Mammary epithelial cell (primary cell): ENCODE measurements at regions of chr20 and their contacts with region 1.

Region 1: DNA sequence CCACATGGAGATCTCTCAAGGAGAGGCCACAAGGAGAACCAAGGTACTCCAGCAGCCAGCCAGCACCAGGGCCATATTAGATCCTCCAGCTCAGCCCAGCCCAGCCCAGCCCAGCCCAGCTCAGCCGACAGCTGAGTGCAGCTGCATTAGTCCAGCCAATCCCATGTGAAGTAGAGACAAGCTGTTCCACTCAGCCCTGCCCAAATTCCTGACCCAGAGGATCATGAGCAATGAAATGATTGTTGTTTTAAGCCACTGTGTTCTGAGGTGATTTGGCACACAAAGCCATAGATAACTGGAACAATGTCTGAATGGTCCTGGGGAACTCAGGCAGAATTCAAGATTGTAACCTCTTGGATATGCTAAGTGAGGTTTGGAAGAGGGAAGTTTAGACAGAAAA is 59.5 kb upstream of the BMP2 start:
- DNase-seq: peak; percentile 84
- H3K4me3 ChIP-seq: no peak overlapping the region
- H3K27ac ChIP-seq: peak overlapping the region; percentile 67
- H3K4me1 ChIP-seq: peaks cover 25% of the 10 kb centered on the region
- H3K27me3 ChIP-seq: no peaks in the 10 kb centered on the region
- CTCF ChIP-seq: no peak

Region 2: DNA sequence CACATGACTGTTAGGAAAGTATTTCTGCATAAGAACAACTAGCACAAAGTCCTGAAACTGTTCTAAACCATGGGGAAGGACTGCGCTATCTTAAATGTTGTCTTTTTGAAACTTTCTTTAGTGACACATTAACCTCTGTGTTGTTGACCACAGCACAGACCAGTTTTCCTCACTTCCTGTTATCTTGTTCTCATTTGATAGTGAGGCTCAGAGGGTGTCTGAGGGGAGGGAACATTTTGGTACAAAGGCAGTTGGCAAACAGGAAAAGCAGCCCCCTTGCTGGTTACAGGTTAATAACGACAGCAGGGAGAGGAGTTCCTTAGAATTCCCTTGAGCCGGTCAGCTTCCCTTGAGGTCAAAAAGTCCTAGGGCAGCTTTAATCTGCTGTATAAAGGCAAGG is 84.0 kb before region 1 on chr20:
- CTCF ChIA-PET with region 1: no interaction called
- dilution Hi-C with region 1: loop called (anchors 5 kb)
- in situ Hi-C with region 1: no loop called
- intact Hi-C with region 1: no loop called
- DNase-seq: no peak
- H3K4me3 ChIP-seq: no peak overlapping the region
- H3K27ac ChIP-seq: no peak overlapping the region
- H3K4me1 ChIP-seq: no peaks in the 10 kb centered on the region
- H3K27me3 ChIP-seq: no peaks in the 10 kb centered on the region
- CTCF ChIP-seq: no peak

Region 3: GRCh38 chr20:6651016-6651415 is 57.0 kb before region 1 on chr20:
- CTCF ChIA-PET with region 1: no interaction called
- dilution Hi-C with region 1: loop called (anchors 5 kb)
- in situ Hi-C with region 1: no loop called
- intact Hi-C with region 1: no loop called
- DNase-seq: peak; percentile 98
- H3K4me3 ChIP-seq: no peak overlapping the region
- H3K27ac ChIP-seq: peak overlapping the region; percentile 35
- H3K4me1 ChIP-seq: peaks cover 36% of the 10 kb centered on the region
- H3K27me3 ChIP-seq: no peaks in the 10 kb centered on the region
- CTCF ChIP-seq: no peak

Region 4: DNA sequence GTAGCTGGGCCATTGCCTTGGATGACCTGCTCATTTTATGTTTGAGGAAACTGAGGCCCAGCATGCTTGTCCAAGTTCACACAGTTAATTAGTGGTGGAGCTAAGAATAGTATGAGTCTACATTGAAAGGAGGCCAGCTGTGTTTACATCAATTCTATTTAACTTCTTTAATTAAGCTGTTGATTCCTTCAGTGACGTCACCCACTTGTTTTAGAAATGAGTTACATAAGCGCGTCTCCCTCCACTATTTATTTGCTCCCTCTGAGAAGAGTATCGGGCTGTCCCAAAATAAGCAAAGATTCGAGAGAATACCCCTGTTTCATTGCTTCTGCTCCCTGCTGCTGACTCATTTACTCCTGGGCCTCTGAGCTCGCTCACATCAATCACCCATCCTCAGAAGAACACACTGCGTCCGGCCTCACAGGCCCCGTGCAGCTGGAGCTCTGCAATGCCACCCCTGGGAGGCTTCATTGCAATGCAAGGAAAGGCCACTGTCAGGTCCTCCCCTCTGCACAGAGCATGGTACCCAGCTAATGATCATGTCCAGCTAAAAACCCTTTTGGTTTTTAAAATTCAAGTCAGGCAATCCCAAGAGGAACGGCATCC is 15.3 kb before region 1 on chr20:
- CTCF ChIA-PET with region 1: no interaction called
- dilution Hi-C with region 1: no loop called
- in situ Hi-C with region 1: no loop called
- intact Hi-C with region 1: no loop called
- DNase-seq: no peak
- H3K4me3 ChIP-seq: no peak overlapping the region
- H3K27ac ChIP-seq: no peak overlapping the region
- H3K4me1 ChIP-seq: peaks cover 3% of the 10 kb centered on the region
- H3K27me3 ChIP-seq: no peaks in the 10 kb centered on the region
- CTCF ChIP-seq: no peak

Region 5: GRCh38 chr20:6746901-6747609 is 39.0 kb after region 1 on chr20:
- CTCF ChIA-PET with region 1: no interaction called
- dilution Hi-C with region 1: no loop called
- in situ Hi-C with region 1: no loop called
- intact Hi-C with region 1: loop called (anchors 2 kb)
- DNase-seq: peak; percentile 90
- H3K4me3 ChIP-seq: no peak overlapping the region
- H3K27ac ChIP-seq: no peak overlapping the region
- H3K4me1 ChIP-seq: no peaks in the 10 kb centered on the region
- H3K27me3 ChIP-seq: no peaks in the 10 kb centered on the region
- CTCF ChIP-seq: no peak

Region 6: GRCh38 chr20:6802227-6802626 is 94.2 kb after region 1 on chr20:
- CTCF ChIA-PET with region 1: no interaction called
- dilution Hi-C with region 1: loop called (anchors 5 kb)
- in situ Hi-C with region 1: no loop called
- intact Hi-C with region 1: no loop called
- DNase-seq: peak; percentile 36
- H3K4me3 ChIP-seq: no peak overlapping the region
- H3K27ac ChIP-seq: no peak overlapping the region
- H3K4me1 ChIP-seq: no peaks in the 10 kb centered on the region
- H3K27me3 ChIP-seq: no peaks in the 10 kb centered on the region
- CTCF ChIP-seq: no peak

Region 7: DNA sequence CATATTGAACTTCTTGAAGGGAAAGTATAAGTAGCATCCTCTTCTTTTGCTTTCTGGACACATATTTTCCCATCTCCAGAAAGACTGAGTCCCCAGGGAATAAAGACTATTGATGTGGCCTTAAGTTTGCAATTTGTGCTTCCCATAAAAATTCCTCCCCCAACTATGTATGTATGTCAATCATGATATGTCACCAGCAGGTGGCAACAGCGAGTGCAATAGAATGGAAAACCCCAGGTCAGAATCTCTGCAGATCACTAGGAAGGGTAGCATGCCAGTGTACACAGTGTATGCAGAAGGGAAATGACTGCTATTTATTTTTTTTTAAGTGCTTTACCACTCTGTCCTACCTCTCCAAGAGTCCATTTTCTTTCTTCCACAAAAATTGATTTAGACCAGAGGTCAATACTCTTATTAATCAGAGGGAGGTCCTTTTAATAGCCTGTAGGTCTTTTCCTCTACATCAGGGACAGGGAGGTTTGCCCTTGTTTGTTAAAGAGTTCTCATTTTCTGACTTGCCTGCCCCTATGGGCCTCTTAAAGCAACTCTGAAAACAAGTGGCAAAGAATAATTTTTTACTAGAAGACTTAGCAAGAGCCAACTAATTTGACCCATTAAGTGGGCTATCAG is 120.9 kb after region 1 on chr20:
- CTCF ChIA-PET with region 1: no interaction called
- dilution Hi-C with region 1: no loop called
- in situ Hi-C with region 1: no loop called
- intact Hi-C with region 1: no loop called
- DNase-seq: peak; percentile 68
- H3K4me3 ChIP-seq: no peak overlapping the region
- H3K27ac ChIP-seq: peak overlapping the region; percentile 39
- H3K4me1 ChIP-seq: peaks cover 11% of the 10 kb centered on the region
- H3K27me3 ChIP-seq: no peaks in the 10 kb centered on the region
- CTCF ChIP-seq: peak; percentile 73 to 76

Region 8: GRCh38 chr20:6925744-6926278 is 217.8 kb after region 1 on chr20:
- CTCF ChIA-PET with region 1: no interaction called
- dilution Hi-C with region 1: loop called (anchors 5 kb)
- in situ Hi-C with region 1: no loop called
- intact Hi-C with region 1: no loop called
- DNase-seq: peak; percentile 88
- H3K4me3 ChIP-seq: peak overlapping the region in 2 of 3 experiments; percentile 13 to 27
- H3K27ac ChIP-seq: peak overlapping the region; percentile 75
- H3K4me1 ChIP-seq: peaks cover 19% of the 10 kb centered on the region
- H3K27me3 ChIP-seq: no peaks in the 10 kb centered on the region
- CTCF ChIP-seq: no peak